Activated T-helper 1 cell treated with anti-CD3 and anti-CD28 coated beads, Interleukin-12 subunit alpha, Interleukin-12 subunit beta, Interleukin-2, Interleukin-4 antibody, amounts not matched to agents 30 ng/mL and 10 ng/mL and 1 ng/mL, durations not matched to agents 14 hours and 24 hours and 36 hours (primary cell): ENCODE measurements at regions of chr4 and their contacts with region 1.

Region 1: DNA sequence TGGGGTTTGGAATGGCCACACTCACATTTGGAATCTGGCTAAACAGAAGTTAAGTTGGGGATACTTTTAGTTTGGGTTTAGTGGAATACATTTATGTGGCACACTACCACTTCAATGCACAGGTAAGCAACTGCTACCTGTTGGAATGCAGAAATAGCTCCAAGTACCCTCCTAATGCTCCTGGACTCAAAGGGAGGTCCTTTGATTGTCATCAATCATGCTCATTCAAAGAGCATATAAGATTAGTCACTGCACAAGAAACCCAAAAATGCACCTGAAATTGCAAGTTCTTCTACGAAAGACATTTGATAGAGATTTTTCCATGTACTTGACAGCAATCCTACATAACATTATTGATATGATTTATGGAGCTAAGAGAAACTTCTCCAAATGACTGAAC is 247.7 kb downstream of the ANKRD50 start:
- DNase-seq: no peak
- H3K4me3 Mint-ChIP-seq: no peak overlapping the region
- H3K27ac Mint-ChIP-seq: no peak overlapping the region
- H3K4me1 Mint-ChIP-seq: no peaks in the 10 kb centered on the region
- H3K27me3 Mint-ChIP-seq: no peaks in the 10 kb centered on the region

Region 2: GRCh38 chr4:124427095-124427767 is 37.6 kb before region 1 on chr4:
- intact Hi-C with region 1: loop called (anchors 1 kb)
- DNase-seq: no peak
- H3K4me3 Mint-ChIP-seq: no peak overlapping the region
- H3K27ac Mint-ChIP-seq: no peak overlapping the region
- H3K4me1 Mint-ChIP-seq: no peaks in the 10 kb centered on the region
- H3K27me3 Mint-ChIP-seq: no peaks in the 10 kb centered on the region

Region 3: DNA sequence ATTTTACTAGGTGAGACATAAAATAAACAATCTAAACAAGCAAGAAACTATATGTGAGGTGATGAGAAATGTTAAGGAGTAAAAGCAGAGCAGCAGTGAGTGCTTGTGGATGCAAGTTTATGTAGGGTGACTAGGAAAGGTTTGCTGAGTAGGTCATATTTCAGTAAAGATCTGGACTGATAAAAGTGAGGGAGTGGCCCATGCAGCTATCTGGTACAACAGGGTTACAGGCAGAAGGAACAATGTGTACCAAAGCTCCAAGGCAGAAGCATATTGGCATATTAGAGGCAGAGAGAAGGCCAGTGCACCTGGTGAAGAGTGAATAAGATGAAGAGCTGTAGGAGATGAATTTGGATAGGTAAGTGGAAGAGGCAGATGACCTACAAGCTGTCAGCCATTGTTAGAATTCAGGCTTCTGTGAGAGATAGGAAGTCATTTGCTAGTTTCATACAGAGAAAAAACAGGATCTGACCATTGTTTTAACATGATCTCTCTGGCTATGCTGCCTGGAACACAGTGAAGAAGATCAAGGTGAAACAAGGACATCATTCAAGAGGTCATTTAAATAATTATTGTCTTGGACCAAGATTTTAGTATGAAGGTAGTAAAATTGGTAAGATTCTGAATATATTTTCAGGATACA is 26.9 kb before region 1 on chr4:
- intact Hi-C with region 1: no loop called
- DNase-seq: no peak
- H3K4me3 Mint-ChIP-seq: no peak overlapping the region
- H3K27ac Mint-ChIP-seq: no peak overlapping the region
- H3K4me1 Mint-ChIP-seq: no peaks in the 10 kb centered on the region
- H3K27me3 Mint-ChIP-seq: no peaks in the 10 kb centered on the region